Cardiac septum (tissue), 1 donor: ENCODE measurements at regions of chr14 and their contacts with region 1.

Region 1: GRCh38 chr14:78566026-78566858 is 396.1 kb downstream of the NRXN3 start:
- DNase-seq: peak; percentile 84

Region 2: GRCh38 chr14:77862154-77862786 is 704.0 kb before region 1 on chr14:
- intact Hi-C with region 1: loop called (anchors 5 kb)
- DNase-seq: peak; percentile 89

Region 3: GRCh38 chr14:78022059-78022458 is 544.2 kb before region 1 on chr14:
- intact Hi-C with region 1: loop called (anchors 5 kb)
- DNase-seq: no peak

Region 4: DNA sequence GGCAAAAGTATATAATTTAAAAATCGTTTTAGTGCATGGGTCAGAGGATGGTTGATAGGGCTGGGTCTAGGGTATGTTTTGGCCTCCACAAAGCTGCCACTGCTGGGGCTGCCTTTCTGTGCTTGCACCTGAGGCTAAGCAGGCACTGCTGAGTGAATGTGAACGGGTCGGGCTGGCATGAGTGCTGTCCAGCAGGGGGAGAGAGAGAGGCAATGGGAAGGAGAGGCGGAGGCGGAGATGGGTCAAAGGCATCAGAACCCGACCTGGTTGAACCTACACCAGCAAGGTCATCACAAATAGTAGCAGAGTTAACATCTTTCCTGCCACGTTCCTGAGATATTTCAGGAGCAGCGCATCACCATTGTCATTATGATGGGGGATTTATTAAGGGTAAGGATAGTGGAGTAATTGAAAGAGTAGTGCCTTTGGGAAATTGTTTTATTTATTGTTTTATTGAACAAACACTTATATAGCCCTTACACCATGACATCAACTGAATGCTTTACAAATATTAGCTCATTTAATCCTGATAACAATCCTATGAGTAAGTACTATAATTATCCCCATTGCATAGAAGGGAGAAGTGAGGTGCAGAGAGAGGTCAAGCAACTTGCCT is 401.9 kb before region 1 on chr14:
- intact Hi-C with region 1: loop called (anchors 10 kb)
- DNase-seq: no peak

Region 5: DNA sequence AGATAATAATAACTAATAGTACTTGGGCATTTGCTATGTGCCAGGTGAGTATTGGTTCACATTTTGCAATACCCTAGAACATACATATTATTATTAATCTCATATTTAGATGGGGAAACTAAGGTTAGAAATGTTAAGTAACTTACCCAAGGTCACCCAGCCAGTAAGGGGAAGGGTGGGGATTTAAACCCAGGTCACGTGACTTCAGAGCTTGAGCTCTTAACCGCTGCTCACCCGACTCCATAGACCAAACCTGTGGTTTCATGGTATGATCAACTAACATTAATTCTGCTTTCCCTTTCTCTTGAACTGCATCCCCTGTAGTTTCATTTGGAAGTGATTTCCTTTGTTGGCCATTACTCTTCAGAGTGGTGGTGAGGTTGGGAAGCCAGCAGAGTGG is 153.8 kb before region 1 on chr14:
- intact Hi-C with region 1: no loop called
- DNase-seq: no peak

Region 6: DNA sequence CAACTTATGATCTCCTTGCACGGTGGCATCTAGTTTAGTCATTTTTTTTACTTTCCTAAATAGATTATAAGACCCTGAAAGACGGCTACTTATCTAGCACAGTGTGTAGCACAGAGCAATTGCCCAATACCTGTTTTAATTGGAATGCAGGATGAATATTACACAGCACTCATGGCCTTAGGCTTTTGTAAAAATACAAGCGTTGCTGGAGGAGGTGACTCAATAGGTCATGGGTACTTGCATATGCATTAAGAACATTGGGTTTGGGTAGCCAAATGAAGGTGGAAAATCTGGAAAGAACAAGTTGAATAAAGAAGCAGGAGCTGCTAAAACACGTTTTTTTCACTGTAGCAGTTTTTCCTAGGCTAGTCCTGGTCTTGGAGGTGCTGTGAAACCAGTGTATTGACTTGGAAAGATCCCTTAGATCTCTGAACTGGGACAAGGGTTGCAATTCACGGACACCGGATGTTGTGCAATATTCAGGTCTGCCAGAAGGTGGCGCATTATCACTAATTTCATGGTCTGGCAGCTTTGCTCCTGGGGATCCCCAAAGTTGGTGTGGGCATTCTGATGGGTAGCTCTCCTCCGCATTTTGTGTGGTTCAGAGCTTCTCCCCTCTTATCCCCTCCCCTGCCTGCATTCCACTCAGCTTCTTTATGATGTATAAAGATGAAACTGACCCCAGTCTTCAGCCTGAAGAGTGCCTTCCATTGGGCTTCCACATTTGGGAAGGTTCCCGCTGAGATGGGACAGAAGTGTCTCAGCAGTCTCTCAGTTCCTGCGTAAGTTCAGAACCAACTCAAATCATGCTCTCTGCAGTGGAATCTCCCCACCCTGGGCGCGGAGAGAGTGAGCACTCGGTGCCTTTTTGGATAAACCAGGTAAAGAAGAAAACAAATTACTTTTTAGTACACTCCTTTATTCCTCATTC is 117.8 kb before region 1 on chr14:
- intact Hi-C with region 1: loop called (anchors 1 kb)
- DNase-seq: no peak

Region 7: GRCh38 chr14:78509516-78509915 is 56.7 kb before region 1 on chr14:
- intact Hi-C with region 1: no loop called
- DNase-seq: no peak

Region 8: GRCh38 chr14:78535041-78535440 is 31.2 kb before region 1 on chr14:
- intact Hi-C with region 1: no loop called
- DNase-seq: no peak

Region 9: GRCh38 chr14:78627114-78627513 is 60.9 kb after region 1 on chr14:
- intact Hi-C with region 1: no loop called
- DNase-seq: no peak